GM12878 (cell line): ENCODE measurements at regions of chr16 and their contacts with region 1.

Region 1: GRCh38 chr16:75432828-75433731 is at the start of gene CFDP1:
- DNase-seq: peak; percentile 80
- ATAC-seq: peak; percentile 93
- H3K4me3 ChIP-seq: peak within 1 kb of the TSS; percentile 89
- H3K27ac ChIP-seq: peak within 1 kb of the TSS; percentile 71
- H3K4me1 ChIP-seq: no peaks in the 10 kb centered on the region; the same call in 1 of the 2 replicates
- H3K27me3 ChIP-seq: no peaks in the 10 kb centered on the region
- CTCF ChIP-seq: no peak
- EP300 ChIP-seq: no peak
- POLR2A ChIP-seq: peak; percentile 78
- RAD21 ChIP-seq: no peak
- polyA plus RNA-seq, gene CFDP1: 36.6 to 60.8 TPM

Region 2: GRCh38 chr16:75402821-75403475 is 30.1 kb before region 1 on chr16:
- CTCF ChIA-PET with region 1: no interaction called
- POLR2A ChIA-PET with region 1: interaction called, 5 read pairs
- RAD21 ChIA-PET with region 1: interaction called, 3 read pairs
- SMC1A ChIA-PET with region 1: no interaction called
- in situ Hi-C with region 1: no loop called
- intact Hi-C with region 1: loop called (anchors 1 kb)
- DNase-seq: no peak
- ATAC-seq: peak; percentile 59; the same call in 2 of the 3 replicates
- H3K4me3 ChIP-seq: no peak overlapping the region
- H3K27ac ChIP-seq: no peak overlapping the region
- H3K4me1 ChIP-seq: no peaks in the 10 kb centered on the region
- H3K27me3 ChIP-seq: no peaks in the 10 kb centered on the region
- CTCF ChIP-seq: peak; percentile 45 to 60 (median 55); a peak in 5 of 6 replicates
- EP300 ChIP-seq: no peak
- POLR2A ChIP-seq: no peak
- RAD21 ChIP-seq: peak; percentile 59

Region 3: DNA sequence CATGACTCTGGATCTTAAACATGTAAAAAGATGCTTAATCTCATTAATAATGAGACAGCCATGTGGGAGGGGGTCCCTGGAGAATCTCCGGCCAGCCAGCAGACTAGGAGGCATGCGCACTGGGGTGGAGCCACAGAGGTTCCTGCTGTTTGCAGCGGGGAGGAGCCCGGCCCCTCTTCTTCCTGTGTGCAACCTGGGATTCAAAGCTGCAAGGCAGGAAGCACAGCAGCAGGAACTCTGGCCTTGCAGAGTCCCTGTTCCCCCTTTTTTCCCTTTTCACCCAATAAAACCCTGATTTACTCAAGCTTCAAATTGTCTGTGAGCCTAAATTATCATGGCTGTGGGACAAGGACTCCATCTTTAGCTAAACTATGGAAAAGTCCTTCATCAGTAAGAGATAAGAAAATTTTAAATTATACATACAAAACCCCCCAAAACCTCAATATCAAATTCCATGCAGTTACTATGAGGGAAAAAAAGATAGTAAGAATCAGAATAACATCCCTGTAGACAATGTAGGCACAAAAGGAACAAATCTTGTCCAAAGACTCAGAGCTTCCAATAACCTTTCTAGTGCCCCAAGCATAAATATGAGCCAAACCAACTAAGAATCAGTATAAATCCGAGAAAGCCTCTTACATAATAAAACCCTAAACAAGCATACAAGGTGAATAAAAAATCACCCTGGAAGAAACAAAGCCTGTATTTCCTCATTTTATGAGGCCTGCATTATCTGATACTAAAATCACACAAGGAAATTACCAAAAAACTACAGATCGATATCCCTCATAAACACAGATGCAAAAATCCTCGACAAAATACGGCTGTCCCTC is 11.9 kb before region 1 on chr16:
- CTCF ChIA-PET with region 1: interaction called, 11 read pairs
- POLR2A ChIA-PET with region 1: interaction called, 26 read pairs
- RAD21 ChIA-PET with region 1: interaction called, 8 read pairs
- SMC1A ChIA-PET with region 1: interaction called, 11 read pairs
- in situ Hi-C with region 1: no loop called
- intact Hi-C with region 1: no loop called
- DNase-seq: no peak
- ATAC-seq: peak; percentile 98
- H3K4me3 ChIP-seq: 0 out of 2 replicates have a peak overlapping the region, but pooled peaks have one; percentile 37
- H3K27ac ChIP-seq: peak overlapping the region; percentile 64; the same call in 1 of the 2 replicates
- H3K4me1 ChIP-seq: peaks cover 10% of the 10 kb centered on the region; the same call in 1 of the 2 replicates
- H3K27me3 ChIP-seq: no peaks in the 10 kb centered on the region
- CTCF ChIP-seq: no peak
- EP300 ChIP-seq: no peak
- POLR2A ChIP-seq: no peak
- RAD21 ChIP-seq: no peak

Region 4: DNA sequence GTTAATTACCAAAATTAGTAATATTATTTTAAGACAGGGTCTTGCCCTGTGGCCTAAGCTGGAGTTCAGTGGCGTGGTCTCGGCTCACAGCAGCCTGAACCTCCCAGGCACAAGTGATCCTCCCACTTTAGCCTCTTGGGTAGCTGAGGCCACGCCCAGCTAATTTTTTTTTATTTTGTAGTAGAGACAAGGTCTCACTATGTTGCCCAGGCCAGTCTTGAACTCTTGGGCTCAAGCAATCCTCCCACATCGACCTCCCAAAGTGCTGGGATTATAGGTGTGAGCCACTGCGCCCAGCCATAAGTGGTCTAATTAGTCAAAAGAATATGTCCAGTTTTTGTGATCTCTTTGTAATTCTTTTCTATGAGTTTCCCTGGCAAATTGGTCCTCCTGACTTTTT is 12.2 kb after region 1 on chr16:
- CTCF ChIA-PET with region 1: interaction called, 5 read pairs
- POLR2A ChIA-PET with region 1: interaction called, 3 read pairs
- RAD21 ChIA-PET with region 1: interaction called, 3 read pairs
- SMC1A ChIA-PET with region 1: interaction called, 20 read pairs
- in situ Hi-C with region 1: no loop called
- intact Hi-C with region 1: no loop called
- DNase-seq: no peak
- ATAC-seq: no peak
- H3K4me3 ChIP-seq: no peak overlapping the region
- H3K27ac ChIP-seq: no peak overlapping the region
- H3K4me1 ChIP-seq: no peaks in the 10 kb centered on the region
- H3K27me3 ChIP-seq: no peaks in the 10 kb centered on the region
- CTCF ChIP-seq: no peak
- EP300 ChIP-seq: no peak
- POLR2A ChIP-seq: no peak
- RAD21 ChIP-seq: no peak

Region 5: DNA sequence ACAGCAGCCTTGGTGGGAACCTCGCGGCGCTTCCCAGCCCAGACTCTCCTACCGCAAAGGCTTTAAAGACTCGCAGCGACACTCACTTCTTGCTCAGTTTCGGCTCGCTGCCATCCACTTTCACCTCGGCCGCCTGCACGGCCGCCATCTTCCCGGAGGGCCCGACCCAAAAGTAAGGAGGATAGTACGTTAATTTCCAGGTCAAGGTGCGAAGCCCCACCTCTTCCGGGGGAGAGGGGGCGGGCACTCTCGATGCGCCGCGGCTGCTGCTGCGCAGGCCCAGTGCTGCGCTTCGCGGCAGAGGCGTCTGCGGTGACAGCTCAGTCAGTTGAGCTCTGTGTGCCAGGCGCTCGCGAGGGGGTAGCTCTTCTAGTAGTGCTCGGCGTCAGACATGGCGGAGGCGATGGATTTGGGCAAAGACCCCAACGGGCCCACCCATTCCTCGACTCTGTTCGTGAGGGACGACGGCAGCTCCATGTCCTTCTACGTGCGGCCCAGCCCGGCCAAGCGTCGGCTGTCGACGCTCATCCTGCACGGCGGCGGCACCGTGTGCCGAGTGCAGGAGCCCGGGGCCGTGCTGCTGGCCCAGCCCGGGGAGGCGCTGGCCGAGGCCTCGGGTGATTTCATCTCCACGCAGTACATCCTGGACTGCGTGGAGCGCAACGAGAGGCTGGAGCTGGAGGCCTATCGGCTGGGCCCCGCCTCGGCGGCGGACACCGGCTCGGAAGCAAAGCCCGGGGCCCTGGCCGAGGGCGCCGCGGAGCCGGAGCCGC is 214.6 kb after region 1 on chr16 and contains the starts of genes KARS1 and TERF2IP:
- CTCF ChIA-PET with region 1: interaction called, 3 read pairs
- POLR2A ChIA-PET with region 1: interaction called, 16 read pairs
- RAD21 ChIA-PET with region 1: interaction called, 3 read pairs
- SMC1A ChIA-PET with region 1: interaction called, 5 read pairs
- in situ Hi-C with region 1: no loop called
- intact Hi-C with region 1: no loop called
- DNase-seq: peak; percentile 85
- ATAC-seq: peak; percentile 91
- H3K4me3 ChIP-seq: peak within 1 kb of the TSS; percentile 85
- H3K27ac ChIP-seq: peak within 1 kb of the TSS; percentile 86
- H3K4me1 ChIP-seq: peaks cover 25% of the 10 kb centered on the region
- H3K27me3 ChIP-seq: no peaks in the 10 kb centered on the region; a peak in 1 of 4 replicates
- CTCF ChIP-seq: no peak
- EP300 ChIP-seq: no peak
- POLR2A ChIP-seq: peak; percentile 98
- RAD21 ChIP-seq: no peak
- polyA plus RNA-seq, gene KARS1: 187 to 207 TPM
- polyA plus RNA-seq, gene TERF2IP: 19.6 to 40.6 TPM